ENCODE measurements at regions of chr9 and their contacts with region 1.

Region 1: DNA sequence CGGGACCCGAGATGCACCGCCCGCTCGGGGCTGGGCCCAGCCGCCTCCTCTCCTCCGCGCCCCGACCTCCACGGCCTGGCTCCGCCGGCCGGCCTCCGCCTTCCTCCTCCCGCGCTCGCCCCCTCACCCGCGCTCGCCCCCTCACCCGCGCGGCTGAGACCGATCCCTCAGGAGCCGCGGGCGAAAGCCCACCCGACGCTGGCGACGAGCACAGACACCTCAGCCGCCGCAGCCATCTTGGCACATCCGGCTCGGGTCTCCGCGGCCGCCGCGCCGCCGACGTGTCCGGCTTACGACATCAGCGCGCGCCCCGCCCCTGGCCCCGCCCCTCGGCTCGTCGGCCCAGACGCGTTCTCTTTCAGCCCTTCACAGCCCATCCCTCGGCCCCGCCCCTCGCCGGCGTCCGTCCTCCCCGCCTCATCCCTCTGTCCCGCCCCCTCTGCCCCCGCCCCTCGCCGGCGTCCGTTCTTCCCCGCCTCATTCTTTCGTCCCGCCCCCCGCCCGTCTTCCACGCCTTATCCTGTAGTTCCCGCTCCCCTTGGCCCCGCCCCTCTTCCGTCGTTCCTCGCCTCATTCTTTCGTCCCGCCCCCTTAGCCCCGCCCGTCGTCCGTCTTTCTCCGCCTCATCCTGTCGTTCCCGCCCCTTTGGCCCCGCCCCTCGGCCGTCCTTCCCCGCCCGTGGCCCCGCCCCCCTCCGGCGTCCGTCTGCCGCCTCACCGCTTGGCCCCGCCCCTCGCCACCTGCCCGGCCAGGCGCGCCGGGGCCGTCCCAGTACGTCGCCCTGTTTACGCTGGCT is at the start of gene SEC16A:
- DNase-seq: peak; percentile 82 to 98
- ATAC-seq: peak; percentile 53 to 62
- H3K4me3 ChIP-seq: peak within 1 kb of the TSS; percentile 96
- H3K27ac ChIP-seq: peak within 1 kb of the TSS; percentile 91 to 98
- H3K4me1 ChIP-seq: peaks cover 15% of the 10 kb centered on the region
- CTCF ChIP-seq: no peak
- EP300 ChIP-seq: no peak
- POLR2A ChIP-seq: peak; percentile 88
- RAD21 ChIP-seq: no peak
- polyA plus RNA-seq, gene SEC16A: 24.2 and 32.3 TPM in 2 replicates

Region 2: DNA sequence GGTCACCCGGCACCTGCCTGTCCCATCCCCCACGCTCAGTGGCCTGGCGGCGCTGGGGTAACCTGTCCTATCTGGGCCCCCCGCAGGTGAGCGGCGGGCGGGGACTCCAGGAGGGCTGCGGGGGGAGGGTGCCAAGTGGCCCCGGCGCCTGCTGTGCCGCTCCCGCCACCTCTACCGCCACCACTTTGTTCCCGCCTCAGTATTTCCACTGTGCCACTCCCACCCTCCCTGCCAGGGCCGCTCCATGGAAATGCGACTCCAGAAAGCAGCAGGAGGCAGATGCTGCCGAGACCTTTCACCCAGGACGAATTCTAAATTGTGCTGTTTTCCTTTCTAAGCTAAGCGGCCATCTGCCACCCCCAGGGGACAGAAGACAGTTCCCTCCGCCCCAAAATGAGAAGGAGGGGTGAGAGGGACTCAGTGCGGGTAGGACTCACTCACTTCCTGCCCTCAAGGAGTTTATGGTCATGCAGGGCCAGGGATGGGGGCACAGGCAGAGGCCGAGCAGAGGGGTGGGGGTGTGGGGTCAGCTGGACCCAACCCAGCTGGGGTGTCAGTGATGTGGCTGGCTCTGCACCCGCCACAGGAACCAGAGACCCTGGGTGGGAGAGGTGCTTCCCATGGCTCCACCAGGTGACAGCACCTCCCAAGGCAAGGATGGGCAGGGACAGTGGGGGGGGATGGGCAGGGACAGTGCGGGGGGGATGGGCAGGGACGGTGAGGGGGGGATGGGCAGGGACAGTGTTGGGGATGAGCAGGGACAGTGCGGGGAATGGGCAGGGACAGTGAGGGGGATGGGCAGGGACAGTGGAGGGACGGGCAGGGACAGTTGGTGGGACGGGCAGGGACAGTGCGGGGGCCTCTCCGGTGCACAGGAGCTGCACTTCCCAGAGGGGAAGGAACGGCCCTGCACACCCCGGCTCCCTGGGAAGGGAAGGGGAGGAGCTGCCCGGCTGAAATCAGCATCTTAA is 45.0 kb after region 1 on chr9:
- CTCF ChIA-PET with region 1: interaction called, 35 read pairs
- POLR2A ChIA-PET with region 1: no interaction called
- DNase-seq: peak; percentile 45 to 48
- ATAC-seq: peak; percentile 32 to 66; a peak in 5 of 6 replicates
- H3K4me3 ChIP-seq: no peak overlapping the region
- H3K27ac ChIP-seq: peak overlapping the region; percentile 62 to 83
- H3K4me1 ChIP-seq: peaks cover 42% of the 10 kb centered on the region
- CTCF ChIP-seq: no peak
- EP300 ChIP-seq: no peak
- POLR2A ChIP-seq: no peak
- RAD21 ChIP-seq: 0 out of 5 replicates have a peak, but pooled peaks of 1 of the 2 experiments have one; percentile 12

Region 3: GRCh38 chr9:136558373-136558772 is 75.4 kb after region 1 on chr9:
- CTCF ChIA-PET with region 1: interaction called, 40 read pairs
- POLR2A ChIA-PET with region 1: interaction called, 4 read pairs
- DNase-seq: no peak
- ATAC-seq: no peak
- H3K4me3 ChIP-seq: no peak overlapping the region
- H3K27ac ChIP-seq: peak overlapping the region; percentile 35 to 76; a peak in 5 of 6 replicates
- H3K4me1 ChIP-seq: peaks cover 16% of the 10 kb centered on the region
- CTCF ChIP-seq: no peak
- EP300 ChIP-seq: no peak
- POLR2A ChIP-seq: no peak
- RAD21 ChIP-seq: no peak

Region 4: GRCh38 chr9:136625101-136626060 is 142.4 kb after region 1 on chr9:
- CTCF ChIA-PET with region 1: interaction called, 776 read pairs
- POLR2A ChIA-PET with region 1: interaction called, 17 read pairs
- DNase-seq: peak; percentile 66 to 67
- ATAC-seq: peak; percentile 45 to 78; a peak in 5 of 6 replicates
- H3K4me3 ChIP-seq: no peak overlapping the region
- H3K27ac ChIP-seq: peak overlapping the region; percentile 10 to 68; a peak in 5 of 6 replicates
- H3K4me1 ChIP-seq: peaks cover 40% of the 10 kb centered on the region
- CTCF ChIP-seq: peak; percentile 68
- EP300 ChIP-seq: no peak
- POLR2A ChIP-seq: no peak
- RAD21 ChIP-seq: peak; percentile 92 to 94

Region 5: GRCh38 chr9:136650648-136651047 is 167.7 kb after region 1 on chr9:
- CTCF ChIA-PET with region 1: interaction called, 313 read pairs
- POLR2A ChIA-PET with region 1: no interaction called
- DNase-seq: no peak
- ATAC-seq: no peak
- H3K4me3 ChIP-seq: no peak overlapping the region
- H3K27ac ChIP-seq: no peak overlapping the region
- H3K4me1 ChIP-seq: no peaks in the 10 kb centered on the region; the same call in 2 of the 3 replicates
- CTCF ChIP-seq: no peak
- EP300 ChIP-seq: no peak
- POLR2A ChIP-seq: no peak
- RAD21 ChIP-seq: no peak

Region 6: DNA sequence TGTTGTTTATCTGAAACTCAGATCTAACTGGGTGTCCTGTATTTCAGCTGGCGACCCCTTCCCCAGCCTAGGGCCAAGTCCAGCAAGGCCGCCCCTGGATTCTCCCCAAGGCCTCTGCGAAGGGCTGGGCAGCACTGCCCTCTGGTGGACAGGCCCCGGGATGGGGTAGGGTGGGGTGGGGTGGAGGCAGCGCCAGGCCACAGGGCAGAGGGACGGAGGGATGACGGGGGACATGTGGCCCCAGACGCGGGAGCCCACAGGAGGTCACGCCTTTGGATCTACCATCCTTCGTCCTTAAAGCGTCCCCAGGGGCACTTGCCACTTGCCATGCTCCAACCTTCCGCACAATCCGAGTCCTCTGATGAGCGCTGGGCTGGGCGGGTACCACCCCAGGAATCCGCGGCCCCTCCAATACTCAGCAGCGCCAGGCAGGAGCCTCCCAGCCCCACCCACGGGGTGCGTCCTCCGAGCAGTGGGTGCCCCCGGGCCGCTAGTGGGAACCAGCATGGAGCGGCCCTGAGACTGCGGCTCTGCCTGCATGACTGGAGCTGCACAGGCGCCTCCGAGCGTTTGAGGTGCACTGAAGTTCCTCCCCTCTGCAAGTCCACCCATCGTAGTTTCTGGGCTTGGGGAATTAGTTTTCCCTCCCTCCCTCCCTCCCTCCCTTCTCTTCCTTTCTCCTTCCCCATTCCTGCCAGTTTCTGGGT is 211.4 kb after region 1 on chr9:
- CTCF ChIA-PET with region 1: interaction called, 19 read pairs
- POLR2A ChIA-PET with region 1: interaction called, 3 read pairs
- DNase-seq: peak; percentile 75 to 90
- ATAC-seq: peak; percentile 73 to 87
- H3K4me3 ChIP-seq: peak overlapping the region; percentile 19; the same call in 2 of the 3 replicates
- H3K27ac ChIP-seq: peak overlapping the region; percentile 73 to 87
- H3K4me1 ChIP-seq: peaks cover 78% of the 10 kb centered on the region
- CTCF ChIP-seq: peak; percentile 90
- EP300 ChIP-seq: no peak
- POLR2A ChIP-seq: no peak
- RAD21 ChIP-seq: peak; percentile 87 to 92

Region 7: DNA sequence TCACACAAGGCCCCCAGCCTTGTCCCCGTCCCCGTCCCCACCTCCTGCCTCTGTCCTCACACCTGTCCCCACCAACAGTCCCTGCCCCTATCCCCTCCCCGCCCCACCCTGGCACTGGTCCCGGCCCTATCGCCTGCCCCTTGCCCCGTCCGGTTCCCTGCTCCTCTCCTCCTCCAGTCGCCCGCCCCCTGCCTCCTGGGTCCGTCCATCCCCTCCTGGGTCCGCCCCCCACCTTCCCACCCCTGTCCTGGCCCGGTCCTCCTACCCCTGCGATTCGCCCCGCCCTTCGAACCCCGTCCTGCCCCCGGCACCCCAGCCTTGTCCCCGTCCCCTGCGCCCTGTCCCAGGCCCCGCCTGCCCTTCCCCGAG is 382.7 kb after region 1 on chr9:
- CTCF ChIA-PET with region 1: no interaction called
- POLR2A ChIA-PET with region 1: no interaction called
- DNase-seq: no peak
- ATAC-seq: peak; percentile 5 to 44; a peak in 4 of 6 replicates
- H3K4me3 ChIP-seq: peak overlapping the region; percentile 91
- H3K27ac ChIP-seq: peak overlapping the region; percentile 89 to 99
- H3K4me1 ChIP-seq: peaks cover 27% of the 10 kb centered on the region
- CTCF ChIP-seq: no peak
- EP300 ChIP-seq: no peak
- POLR2A ChIP-seq: no peak
- RAD21 ChIP-seq: no peak